Gastrocnemius medialis (tissue), 4 donors: ENCODE measurements at regions of chr4 and their contacts with region 1.

Region 1: GRCh38 chr4:83034630-83035494 is at the start of gene COPS4:
- DNase-seq: peak; percentile 98 to 99
- ATAC-seq: peak; percentile 98 to 99
- H3K4me3 ChIP-seq: peak within 1 kb of the TSS; percentile 84 to 97 (median 90)
- H3K27ac ChIP-seq: peak within 1 kb of the TSS; percentile 91 to 93 (median 92)
- H3K4me1 ChIP-seq: peaks cover 26 to 33% of the 10 kb centered on the region in 2 donors
- H3K27me3 ChIP-seq: no peaks in the 10 kb centered on the region
- CTCF ChIP-seq: peak in 4 of 5 experiments; percentile 31 to 68 (median 52)
- POLR2A ChIP-seq: peak; percentile 57 to 79
- total RNA-seq, gene COPS4: 67.9 to 151 (median 91.9) TPM

Region 2: GRCh38 chr4:82373816-82374625 is 660.8 kb before region 1 on chr4 and contains the start of gene HNRNPD:
- in situ Hi-C with region 1: no loop called
- intact Hi-C with region 1: loop called (anchors 1 kb)
- DNase-seq: peak; percentile 97 to 99
- ATAC-seq: peak; percentile 90 to 91
- H3K4me3 ChIP-seq: peak within 1 kb of the TSS; percentile 82 to 99 (median 96)
- H3K27ac ChIP-seq: peak within 1 kb of the TSS; percentile 99 to 100 (median 100)
- H3K4me1 ChIP-seq: peaks cover 42 to 44% of the 10 kb centered on the region in 2 donors
- H3K27me3 ChIP-seq: no peaks in the 10 kb centered on the region
- CTCF ChIP-seq: peak in 2 of 5 experiments; percentile 20 to 21
- POLR2A ChIP-seq: peak; percentile 92 to 95
- total RNA-seq, gene HNRNPD: 26.9 to 46.0 (median 37.4) TPM

Region 3: DNA sequence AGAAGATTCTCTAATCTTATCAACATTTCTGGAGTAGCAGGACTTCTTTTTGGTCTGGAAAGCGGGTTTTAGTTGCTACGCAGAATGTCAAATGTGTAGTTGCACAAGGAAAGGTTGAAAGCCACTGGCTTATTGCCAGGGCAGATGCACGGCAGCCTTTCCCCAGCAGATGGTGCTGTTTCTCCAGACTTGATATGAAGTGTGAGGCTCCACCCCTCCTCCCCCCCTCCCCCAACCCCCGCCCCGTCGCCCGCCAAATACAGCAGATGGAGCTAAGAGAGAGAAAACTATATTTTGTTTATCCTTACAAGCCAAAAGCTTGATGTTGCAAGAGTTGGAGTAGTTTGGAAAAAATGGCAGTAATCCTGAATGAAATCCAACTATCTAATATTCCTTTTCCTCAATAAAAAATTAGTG is 572.4 kb before region 1 on chr4:
- in situ Hi-C with region 1: no loop called
- intact Hi-C with region 1: loop called (anchors 1 kb)
- DNase-seq: peak; percentile 64 to 87
- ATAC-seq: peak; percentile 82 to 93
- H3K4me3 ChIP-seq: no peak overlapping the region
- H3K27ac ChIP-seq: no peak overlapping the region
- H3K4me1 ChIP-seq: peaks cover 0 to 5% of the 10 kb centered on the region in 2 donors
- H3K27me3 ChIP-seq: no peaks in the 10 kb centered on the region
- CTCF ChIP-seq: peak; percentile 39 to 94 (median 71)
- POLR2A ChIP-seq: no peak

Region 4: GRCh38 chr4:82890901-82891706 is 143.8 kb before region 1 on chr4 and contains the start of gene SEC31A:
- in situ Hi-C with region 1: loop called in 2 of 4 experiments (anchors 10 kb)
- intact Hi-C with region 1: loop called (anchors 2 kb)
- DNase-seq: peak; percentile 92 to 94
- ATAC-seq: peak; percentile 93 to 95
- H3K4me3 ChIP-seq: peak within 1 kb of the TSS; percentile 85 to 96 (median 88)
- H3K27ac ChIP-seq: peak within 1 kb of the TSS; percentile 96 to 97 (median 96)
- H3K4me1 ChIP-seq: peaks cover 32 to 34% of the 10 kb centered on the region in 2 donors
- H3K27me3 ChIP-seq: no peaks in the 10 kb centered on the region
- CTCF ChIP-seq: peak in 1 of 5 experiments; percentile 22
- POLR2A ChIP-seq: peak; percentile 93
- total RNA-seq, gene SEC31A: 95.2 to 112 (median 105) TPM

Region 5: DNA sequence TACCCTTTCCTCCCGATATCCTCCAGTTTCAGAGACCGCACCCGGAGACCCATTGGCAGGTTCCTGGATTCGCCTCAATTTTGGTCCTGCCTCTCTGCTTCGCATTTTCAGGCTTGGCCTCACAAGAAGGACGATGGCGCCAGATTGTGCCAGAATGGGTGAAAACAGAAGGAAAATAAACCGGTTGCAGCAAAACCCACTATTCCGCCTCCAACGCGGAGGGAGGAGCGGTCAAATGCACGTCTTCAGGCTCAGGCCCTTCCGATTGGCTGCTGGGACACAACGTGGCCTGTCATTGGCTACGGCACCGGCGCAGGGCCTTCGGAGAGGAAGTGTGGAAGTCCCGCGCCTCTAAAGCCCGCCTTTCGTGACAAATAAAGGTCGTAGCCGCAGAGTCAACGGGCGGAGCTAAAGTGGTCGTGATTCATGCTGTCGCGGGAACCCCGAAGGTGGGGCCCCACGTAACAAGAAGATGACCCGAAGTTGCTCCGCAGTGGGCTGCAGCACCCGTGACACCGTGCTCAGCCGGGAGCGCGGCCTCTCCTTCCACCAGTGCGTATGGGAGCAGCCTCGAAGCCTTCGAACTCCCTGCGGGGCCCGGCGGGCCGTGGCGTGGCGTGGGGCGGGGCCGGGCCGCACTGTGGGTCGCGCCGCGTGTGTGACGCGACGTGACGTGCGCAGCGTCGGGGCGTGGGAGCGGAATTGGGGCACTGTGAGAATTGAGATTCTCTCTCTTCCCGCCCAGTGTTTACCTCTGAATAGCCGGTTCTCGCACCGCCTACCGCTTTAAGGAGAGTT is 134.3 kb before region 1 on chr4 and contains the start of gene THAP9:
- in situ Hi-C with region 1: loop called in 1 of 4 experiments (anchors 10 kb)
- intact Hi-C with region 1: loop called (anchors 1 kb)
- DNase-seq: peak; percentile 99
- ATAC-seq: peak; percentile 96
- H3K4me3 ChIP-seq: peak within 1 kb of the TSS; percentile 65 to 92 (median 82)
- H3K27ac ChIP-seq: peak within 1 kb of the TSS; percentile 94 to 98 (median 96)
- H3K4me1 ChIP-seq: peaks cover 32 to 34% of the 10 kb centered on the region in 2 donors
- H3K27me3 ChIP-seq: no peaks in the 10 kb centered on the region
- CTCF ChIP-seq: no peak
- POLR2A ChIP-seq: peak; percentile 78 to 89
- total RNA-seq, gene THAP9: 7.6 to 11.1 (median 8.4) TPM

Region 6: DNA sequence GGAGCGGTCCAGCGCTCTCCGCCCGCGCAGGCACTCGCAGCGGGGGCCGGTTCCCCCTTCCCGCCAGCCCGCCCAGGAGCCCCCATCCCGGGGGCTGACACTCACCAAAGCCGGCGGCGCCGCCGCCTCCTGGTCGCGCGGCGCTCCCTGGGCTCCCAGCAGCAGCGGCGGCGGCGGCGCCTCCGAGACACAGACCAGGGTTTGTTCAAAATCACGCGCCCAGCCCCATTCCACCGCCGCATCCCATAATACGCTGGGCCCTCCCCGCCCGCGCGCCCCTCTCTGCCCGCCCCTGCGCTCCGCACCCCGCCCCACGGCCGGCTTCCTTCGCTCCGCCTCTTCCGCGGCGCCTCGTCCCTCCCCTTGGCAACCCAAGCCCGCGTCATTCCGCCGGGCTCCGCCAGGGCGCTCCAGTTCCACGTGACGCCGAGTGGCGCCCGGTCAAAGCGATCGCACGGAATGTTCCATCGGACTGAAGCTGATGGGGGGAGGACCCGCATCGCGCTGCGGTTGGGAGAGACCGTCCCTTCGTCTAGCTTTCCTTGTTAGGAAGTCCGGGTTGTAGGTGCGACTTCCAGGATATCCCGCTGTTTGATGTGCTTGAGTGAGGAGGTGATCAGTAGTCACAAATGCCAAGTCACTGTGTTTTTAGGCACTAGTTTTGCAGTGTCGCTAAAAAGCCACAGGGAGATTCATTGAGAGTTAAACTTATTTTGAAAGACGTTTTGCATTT is 22.0 kb before region 1 on chr4:
- in situ Hi-C with region 1: no loop called
- intact Hi-C with region 1: loop called (anchors 1 kb)
- DNase-seq: peak; percentile 93 to 96
- ATAC-seq: peak; percentile 90
- H3K4me3 ChIP-seq: peak overlapping the region; percentile 70 to 94 (median 79)
- H3K27ac ChIP-seq: peak overlapping the region; percentile 90 to 96 (median 94)
- H3K4me1 ChIP-seq: peaks cover 27 to 33% of the 10 kb centered on the region in 2 donors
- H3K27me3 ChIP-seq: no peaks in the 10 kb centered on the region
- CTCF ChIP-seq: peak; percentile 37 to 64 (median 53)
- POLR2A ChIP-seq: peak; percentile 86 to 93

Region 7: GRCh38 chr4:83639849-83640493 is 605.1 kb after region 1 on chr4:
- in situ Hi-C with region 1: no loop called
- intact Hi-C with region 1: no loop called
- DNase-seq: peak; percentile 23 to 41
- ATAC-seq: peak; percentile 89 to 96
- H3K4me3 ChIP-seq: no peak overlapping the region
- H3K27ac ChIP-seq: no peak overlapping the region
- H3K4me1 ChIP-seq: peaks cover 0 to 3% of the 10 kb centered on the region in 2 donors
- H3K27me3 ChIP-seq: no peaks in the 10 kb centered on the region
- CTCF ChIP-seq: peak; percentile 82 to 89 (median 84)
- POLR2A ChIP-seq: no peak